ENCODE measurements at regions of chr1 and their contacts with region 1.

Region 1: DNA sequence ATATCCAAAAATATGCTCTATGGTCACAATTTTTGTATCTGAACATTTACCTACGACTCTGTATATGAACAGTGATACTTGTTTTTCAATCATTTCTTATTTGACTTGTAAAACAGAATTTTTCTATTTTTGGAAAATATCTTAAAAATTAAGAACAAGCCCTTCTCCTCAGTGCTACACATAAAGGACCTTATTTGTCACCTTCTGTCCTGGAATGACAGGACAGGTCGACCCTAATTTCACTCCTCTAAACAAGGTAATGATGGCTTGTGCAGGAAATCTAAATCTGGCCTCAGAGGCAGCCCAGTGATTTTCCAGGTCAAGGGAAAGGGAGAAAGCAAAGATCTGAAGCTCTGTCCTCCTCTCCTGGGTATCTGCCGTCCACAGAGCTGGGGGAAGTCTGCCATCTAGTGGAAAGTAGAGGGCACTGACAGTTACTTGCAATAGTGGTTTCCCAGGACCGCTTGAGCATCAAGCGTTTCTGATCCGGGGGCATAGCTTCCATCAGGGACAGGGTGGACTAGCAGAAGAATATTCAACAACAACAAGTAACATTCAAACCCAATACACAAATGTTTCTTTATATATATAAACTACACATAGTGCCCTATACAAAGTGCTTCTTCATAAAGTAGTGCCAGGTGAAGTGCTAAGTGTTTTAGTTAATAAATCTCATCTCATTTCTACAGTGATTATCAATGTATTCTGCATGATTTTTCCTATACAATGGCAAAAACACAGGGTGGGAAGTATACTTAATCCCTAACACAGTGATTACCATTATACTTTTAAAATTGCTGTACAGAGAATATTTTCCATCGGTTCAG is 74.6 kb downstream of the SLC25A24 start:
- DNase-seq: peak; percentile 48 to 88
- ATAC-seq: peak; percentile 91 to 100 (median 99)
- H3K4me3 ChIP-seq: no peak overlapping the region
- H3K4me3 Mint-ChIP-seq: no peak overlapping the region
- H3K27ac ChIP-seq: no peak overlapping the region
- H3K27ac Mint-ChIP-seq: peak overlapping the region; percentile 36 to 54
- H3K4me1 ChIP-seq: peaks cover 4% of the 10 kb centered on the region
- H3K4me1 Mint-ChIP-seq: peaks cover 20% of the 10 kb centered on the region in 2 donors
- H3K27me3 ChIP-seq: no peaks in the 10 kb centered on the region
- H3K27me3 Mint-ChIP-seq: no peaks in the 10 kb centered on the region
- CTCF ChIP-seq: peak; percentile 95

Region 2: DNA sequence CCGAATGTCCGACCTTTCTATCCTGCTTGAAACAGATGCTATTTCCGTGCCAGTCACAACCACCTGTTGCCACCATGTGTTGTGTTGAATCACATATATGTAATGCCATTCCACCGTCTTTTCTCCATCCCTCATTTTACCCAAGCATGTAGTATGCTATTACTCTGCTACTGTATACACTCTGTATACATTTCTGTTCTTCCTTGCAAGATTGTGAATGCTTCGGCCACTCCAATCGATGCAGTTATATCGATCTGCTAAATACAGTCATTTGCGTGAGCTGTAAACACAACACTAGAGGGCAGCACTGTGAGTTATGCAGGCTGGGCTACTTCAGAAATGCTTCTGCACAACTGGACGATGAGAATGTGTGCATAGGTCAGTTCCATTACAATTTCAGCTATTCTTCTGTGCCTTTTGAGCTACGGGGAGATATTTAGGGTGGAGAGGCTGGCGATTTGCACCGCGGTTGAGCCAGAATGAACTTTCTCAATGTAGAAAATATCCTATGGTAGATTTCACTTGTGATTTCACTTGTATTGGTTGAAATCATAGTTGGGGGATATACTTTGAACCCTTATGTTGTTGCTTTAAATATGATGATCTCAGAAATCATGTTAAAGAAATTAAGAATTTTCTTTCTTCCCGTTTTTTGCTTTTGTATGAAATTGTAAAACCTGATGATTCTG is 694.8 kb before region 1 on chr1:
- intact Hi-C with region 1: loop called (anchors 10 kb)
- DNase-seq: peak in 1 of 2 donors; percentile 20
- ATAC-seq: peak in 1 of 3 donors; percentile 48
- H3K4me3 ChIP-seq: no peak overlapping the region
- H3K4me3 Mint-ChIP-seq: no peak overlapping the region
- H3K27ac ChIP-seq: no peak overlapping the region
- H3K27ac Mint-ChIP-seq: no peak overlapping the region
- H3K4me1 ChIP-seq: no peaks in the 10 kb centered on the region
- H3K4me1 Mint-ChIP-seq: peaks cover 0 to 5% of the 10 kb centered on the region in 2 donors
- H3K27me3 ChIP-seq: no peaks in the 10 kb centered on the region
- H3K27me3 Mint-ChIP-seq: peaks cover 7 to 22% of the 10 kb centered on the region in 2 donors
- CTCF ChIP-seq: peak; percentile 62

Region 3: GRCh38 chr1:107877092-107877491 is 248.4 kb before region 1 on chr1:
- intact Hi-C with region 1: loop called (anchors 10 kb)
- DNase-seq: no peak
- ATAC-seq: peak in 1 of 3 donors; percentile 50
- H3K4me3 ChIP-seq: no peak overlapping the region
- H3K4me3 Mint-ChIP-seq: no peak overlapping the region
- H3K27ac ChIP-seq: no peak overlapping the region
- H3K27ac Mint-ChIP-seq: peak overlapping the region; percentile 10 to 42
- H3K4me1 ChIP-seq: peaks cover 15% of the 10 kb centered on the region
- H3K4me1 Mint-ChIP-seq: peaks cover 71 to 79% of the 10 kb centered on the region in 2 donors
- H3K27me3 ChIP-seq: no peaks in the 10 kb centered on the region
- H3K27me3 Mint-ChIP-seq: no peaks in the 10 kb centered on the region
- CTCF ChIP-seq: no peak

Region 4: DNA sequence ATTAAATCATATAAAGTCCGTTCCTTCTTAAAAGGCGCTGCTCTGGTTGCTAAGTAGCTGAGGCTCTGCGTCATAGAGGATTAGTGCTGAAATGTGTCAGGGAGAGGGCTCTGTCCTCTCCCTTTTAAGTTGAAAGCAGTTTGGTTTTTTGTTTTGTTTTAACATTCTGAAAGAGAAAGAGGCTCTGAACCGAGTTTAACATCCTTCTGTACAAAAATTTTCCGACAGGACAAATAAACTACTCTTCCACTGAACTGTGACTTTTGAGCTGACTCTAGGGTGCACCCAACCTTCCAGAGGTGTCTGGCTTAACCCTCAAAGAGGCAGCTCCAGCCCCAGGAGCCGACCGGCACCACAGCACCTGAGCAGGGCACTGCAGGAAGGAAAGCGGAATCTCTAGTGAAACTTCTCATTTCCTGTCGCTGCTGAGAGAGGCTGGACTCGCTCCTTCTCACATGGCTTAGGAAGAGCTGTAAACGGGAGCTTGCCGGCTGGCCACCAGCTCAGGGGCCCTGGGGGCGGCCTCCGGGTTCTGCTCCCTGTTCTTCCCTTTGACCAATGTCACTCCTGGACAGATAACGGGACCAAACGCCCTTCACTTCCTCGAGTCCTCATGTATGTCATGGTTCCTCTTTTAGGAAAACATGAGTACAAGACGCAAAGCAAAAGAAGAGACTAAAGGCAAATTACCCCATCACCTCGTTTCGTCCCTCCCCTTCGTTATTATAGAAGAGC is 161.8 kb before region 1 on chr1:
- intact Hi-C with region 1: loop called (anchors 1 kb)
- DNase-seq: peak; percentile 47 to 75
- ATAC-seq: peak; percentile 69 to 82 (median 70)
- H3K4me3 ChIP-seq: peak overlapping the region; percentile 84
- H3K4me3 Mint-ChIP-seq: peak overlapping the region; percentile 98
- H3K27ac ChIP-seq: peak overlapping the region; percentile 83
- H3K27ac Mint-ChIP-seq: peak overlapping the region; percentile 95 to 97
- H3K4me1 ChIP-seq: peaks cover 18% of the 10 kb centered on the region
- H3K4me1 Mint-ChIP-seq: peaks cover 47 to 55% of the 10 kb centered on the region in 2 donors
- H3K27me3 ChIP-seq: no peaks in the 10 kb centered on the region
- H3K27me3 Mint-ChIP-seq: no peaks in the 10 kb centered on the region
- CTCF ChIP-seq: no peak

Region 5: DNA sequence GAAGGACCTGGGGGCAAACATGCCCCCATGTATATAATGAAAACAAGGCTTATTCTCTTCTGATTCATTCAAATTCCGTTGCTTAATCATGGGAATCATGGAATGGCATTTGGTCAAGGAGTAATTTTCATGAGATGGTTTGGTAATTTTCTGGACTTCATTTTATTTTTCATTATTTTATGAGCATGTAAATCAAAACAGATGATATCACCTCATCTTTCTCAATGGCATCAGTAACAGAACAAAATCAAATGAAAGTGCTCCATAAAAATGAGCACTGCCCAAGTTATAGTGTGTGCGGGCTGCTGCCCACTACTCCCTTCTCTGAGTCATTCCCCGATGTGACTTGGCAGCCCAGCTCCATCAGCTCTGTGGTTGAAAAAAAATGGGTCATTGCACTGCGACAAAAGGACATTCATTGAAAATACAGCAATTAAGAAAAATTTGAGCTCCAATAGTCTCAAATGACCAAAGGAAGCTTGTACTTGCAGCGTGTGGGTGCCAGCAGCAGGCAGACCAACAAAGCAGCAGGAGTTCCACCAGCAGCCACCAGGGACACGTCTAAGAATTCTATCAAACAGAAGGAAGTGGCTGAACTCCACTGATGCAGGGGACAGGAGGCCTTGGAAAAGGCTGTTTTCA is 76.2 kb before region 1 on chr1:
- intact Hi-C with region 1: loop called (anchors 10 kb)
- DNase-seq: peak in 1 of 2 donors; percentile 49
- ATAC-seq: peak; percentile 63 to 79 (median 66)
- H3K4me3 ChIP-seq: no peak overlapping the region
- H3K4me3 Mint-ChIP-seq: peak overlapping the region; percentile 69
- H3K27ac ChIP-seq: no peak overlapping the region
- H3K27ac Mint-ChIP-seq: peak overlapping the region in 1 of 2 donors; percentile 18
- H3K4me1 ChIP-seq: peaks cover 27% of the 10 kb centered on the region
- H3K4me1 Mint-ChIP-seq: peaks cover 11 to 12% of the 10 kb centered on the region in 2 donors
- H3K27me3 ChIP-seq: no peaks in the 10 kb centered on the region
- H3K27me3 Mint-ChIP-seq: no peaks in the 10 kb centered on the region
- CTCF ChIP-seq: peak; percentile 62